ENCODE measurements at regions of chr7 and their contacts with region 1.

Region 1: GRCh38 chr7:129218514-129219062 is 6.2 kb upstream of the AHCYL2 start:
- DNase-seq: peak; percentile 72 to 80 (median 75)
- H3K4me3 ChIP-seq: no peak overlapping the region
- H3K4me3 Mint-ChIP-seq: no peak overlapping the region
- H3K27ac ChIP-seq: no peak overlapping the region
- H3K27ac Mint-ChIP-seq: peak overlapping the region in 2 of 7 donors; percentile 48 to 60
- H3K4me1 ChIP-seq: peaks cover 14% of the 10 kb centered on the region
- H3K4me1 Mint-ChIP-seq: peaks cover 8 to 11% (median 10%) of the 10 kb centered on the region in 4 donors
- H3K27me3 ChIP-seq: no peaks in the 10 kb centered on the region
- H3K27me3 Mint-ChIP-seq: peaks cover 2 to 6% of the 10 kb centered on the region in 2 donors

Region 2: DNA sequence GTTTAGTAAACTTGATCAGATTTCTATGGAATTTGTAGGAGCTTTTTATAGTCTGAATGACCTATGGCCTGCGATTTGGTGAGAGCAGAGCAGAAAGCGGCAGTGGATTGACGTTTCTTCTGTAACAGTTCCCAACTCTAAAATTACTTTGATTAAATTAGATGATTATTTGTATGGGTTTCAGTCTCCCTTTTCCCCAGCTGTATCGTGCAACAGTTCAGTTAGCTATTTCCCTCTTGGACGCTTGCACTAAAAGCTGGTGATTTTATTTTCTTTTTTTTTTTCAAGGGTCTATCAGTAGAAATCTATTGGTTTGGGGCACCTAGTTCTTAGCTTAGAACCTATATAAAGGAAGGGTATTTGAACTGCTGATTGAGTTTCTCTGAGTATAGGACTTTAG is 13.1 kb after region 1 on chr7:
- CTCF ChIA-PET with region 1: interaction called, 95 read pairs
- POLR2A ChIA-PET with region 1: interaction called, 3 read pairs
- intact Hi-C with region 1: no loop called
- DNase-seq: no peak
- H3K4me3 ChIP-seq: no peak overlapping the region
- H3K4me3 Mint-ChIP-seq: no peak overlapping the region
- H3K27ac ChIP-seq: no peak overlapping the region
- H3K27ac Mint-ChIP-seq: no peak overlapping the region
- H3K4me1 ChIP-seq: peaks cover 2% of the 10 kb centered on the region
- H3K4me1 Mint-ChIP-seq: peaks cover 16 to 24% (median 21%) of the 10 kb centered on the region in 4 donors
- H3K27me3 ChIP-seq: no peaks in the 10 kb centered on the region
- H3K27me3 Mint-ChIP-seq: no peaks in the 10 kb centered on the region

Region 3: DNA sequence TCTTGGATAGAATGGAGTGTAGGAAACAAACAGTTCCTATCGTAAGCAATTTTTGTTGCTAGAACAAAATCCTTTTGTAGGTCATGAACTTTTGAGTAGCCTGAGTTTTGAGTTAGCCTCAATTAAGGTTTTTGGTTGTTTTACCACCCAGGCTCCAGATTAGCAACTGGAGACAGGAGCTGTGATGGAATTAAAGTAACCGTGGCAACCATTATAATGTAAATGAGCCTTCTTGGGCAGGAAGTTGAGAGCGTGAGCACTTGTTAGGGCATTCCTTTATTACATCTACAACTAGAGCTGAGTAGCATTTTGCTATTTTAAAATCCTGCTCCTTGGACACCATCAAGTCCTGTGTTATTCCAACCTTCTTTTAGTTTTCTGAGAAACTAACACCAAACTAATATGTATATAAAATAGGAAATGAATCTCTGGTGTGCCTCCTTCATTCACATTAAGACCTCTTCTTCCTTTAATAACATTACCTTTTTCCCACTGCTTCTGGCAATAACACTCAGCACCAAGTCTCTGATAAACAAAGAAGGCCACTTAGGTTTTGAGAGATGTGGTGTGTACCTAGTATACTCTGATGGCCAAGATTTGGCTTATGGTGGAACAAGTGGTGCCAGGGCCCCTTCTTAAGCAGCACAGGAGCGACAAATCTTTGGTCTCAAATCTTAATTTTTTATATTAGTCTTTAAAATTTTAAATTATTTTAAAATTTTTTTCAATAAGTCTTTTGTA is 40.2 kb after region 1 on chr7:
- CTCF ChIA-PET with region 1: interaction called, 34 read pairs
- POLR2A ChIA-PET with region 1: no interaction called
- intact Hi-C with region 1: no loop called
- DNase-seq: peak in 2 of 5 donors; percentile 13 to 14
- H3K4me3 ChIP-seq: no peak overlapping the region
- H3K4me3 Mint-ChIP-seq: peak overlapping the region; percentile 45 to 88 (median 74)
- H3K27ac ChIP-seq: no peak overlapping the region
- H3K27ac Mint-ChIP-seq: peak overlapping the region; percentile 15 to 91 (median 80)
- H3K4me1 ChIP-seq: peaks cover 25% of the 10 kb centered on the region
- H3K4me1 Mint-ChIP-seq: peaks cover 22 to 37% (median 29%) of the 10 kb centered on the region in 4 donors
- H3K27me3 ChIP-seq: no peaks in the 10 kb centered on the region
- H3K27me3 Mint-ChIP-seq: no peaks in the 10 kb centered on the region

Region 4: GRCh38 chr7:129271500-129272355 is 53.1 kb after region 1 on chr7:
- CTCF ChIA-PET with region 1: interaction called, 358 read pairs
- POLR2A ChIA-PET with region 1: interaction called, 10 read pairs
- intact Hi-C with region 1: loop called (anchors 1 kb)
- DNase-seq: peak; percentile 70 to 73 (median 72)
- H3K4me3 ChIP-seq: no peak overlapping the region
- H3K4me3 Mint-ChIP-seq: peak overlapping the region in 4 of 8 donors; percentile 22 to 76 (median 50)
- H3K27ac ChIP-seq: no peak overlapping the region
- H3K27ac Mint-ChIP-seq: peak overlapping the region in 3 of 7 donors; percentile 33 to 60 (median 36)
- H3K4me1 ChIP-seq: no peaks in the 10 kb centered on the region
- H3K4me1 Mint-ChIP-seq: peaks cover 0 to 6% (median 5%) of the 10 kb centered on the region in 4 donors
- H3K27me3 ChIP-seq: no peaks in the 10 kb centered on the region
- H3K27me3 Mint-ChIP-seq: no peaks in the 10 kb centered on the region

Region 5: GRCh38 chr7:129285111-129285510 is 66.5 kb after region 1 on chr7:
- CTCF ChIA-PET with region 1: interaction called, 17 read pairs
- POLR2A ChIA-PET with region 1: no interaction called
- intact Hi-C with region 1: no loop called
- DNase-seq: no peak
- H3K4me3 ChIP-seq: no peak overlapping the region
- H3K4me3 Mint-ChIP-seq: no peak overlapping the region
- H3K27ac ChIP-seq: no peak overlapping the region
- H3K27ac Mint-ChIP-seq: no peak overlapping the region
- H3K4me1 ChIP-seq: no peaks in the 10 kb centered on the region
- H3K4me1 Mint-ChIP-seq: peaks cover 0 to 2% (median 0%) of the 10 kb centered on the region in 4 donors
- H3K27me3 ChIP-seq: no peaks in the 10 kb centered on the region
- H3K27me3 Mint-ChIP-seq: no peaks in the 10 kb centered on the region

Region 6: DNA sequence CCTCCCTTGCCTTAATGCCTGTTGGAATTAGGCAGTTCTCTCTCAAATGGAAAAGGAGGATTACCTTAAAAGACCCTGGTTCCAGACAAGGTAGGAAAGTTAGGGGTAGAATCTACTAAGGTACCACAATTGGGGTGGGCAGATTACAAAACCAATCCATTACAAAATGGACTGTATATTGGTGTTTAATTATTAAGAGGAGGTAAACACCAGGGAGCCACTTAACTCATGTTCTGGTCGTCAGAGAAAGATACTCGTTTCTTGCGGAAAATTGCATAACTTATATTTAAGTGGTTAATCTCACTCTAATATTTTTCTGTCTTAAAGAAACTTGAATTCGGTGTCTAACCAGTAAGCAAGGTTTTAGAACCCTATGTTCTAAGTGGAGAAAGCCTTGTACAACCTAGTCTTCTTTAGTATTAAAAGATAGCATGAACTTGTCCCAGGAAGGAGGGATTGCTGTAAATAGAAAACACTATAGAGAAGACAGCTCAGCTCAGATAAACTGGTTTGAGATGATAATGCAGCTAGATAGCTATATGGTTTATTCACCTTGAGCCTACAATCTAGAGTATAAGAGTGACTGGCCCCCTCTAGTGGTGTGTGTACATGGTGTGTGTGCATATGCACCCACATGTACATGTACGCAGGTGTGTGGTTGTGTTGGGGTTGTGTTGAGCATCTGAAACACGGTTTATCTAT is 157.6 kb after region 1 on chr7:
- CTCF ChIA-PET with region 1: interaction called, 33 read pairs
- POLR2A ChIA-PET with region 1: no interaction called
- intact Hi-C with region 1: loop called (anchors 1 kb)
- DNase-seq: peak; percentile 23 to 61 (median 34)
- H3K4me3 ChIP-seq: no peak overlapping the region
- H3K4me3 Mint-ChIP-seq: no peak overlapping the region
- H3K27ac ChIP-seq: no peak overlapping the region
- H3K27ac Mint-ChIP-seq: no peak overlapping the region
- H3K4me1 ChIP-seq: no peaks in the 10 kb centered on the region
- H3K4me1 Mint-ChIP-seq: peaks cover 7 to 13% (median 10%) of the 10 kb centered on the region in 4 donors
- H3K27me3 ChIP-seq: no peaks in the 10 kb centered on the region
- H3K27me3 Mint-ChIP-seq: no peaks in the 10 kb centered on the region

Region 7: GRCh38 chr7:129502376-129502776 is 283.8 kb after region 1 on chr7 and contains the start of gene SMKR1:
- CTCF ChIA-PET with region 1: no interaction called
- POLR2A ChIA-PET with region 1: no interaction called
- intact Hi-C with region 1: no loop called
- DNase-seq: peak; percentile 93 to 96 (median 96)
- H3K4me3 ChIP-seq: peak within 1 kb of the TSS; percentile 18 to 55
- H3K4me3 Mint-ChIP-seq: peak within 1 kb of the TSS; percentile 85 to 91 (median 88)
- H3K27ac ChIP-seq: peak within 1 kb of the TSS; percentile 66
- H3K27ac Mint-ChIP-seq: peak within 1 kb of the TSS; percentile 87 to 97 (median 93)
- H3K4me1 ChIP-seq: peaks cover 6% of the 10 kb centered on the region
- H3K4me1 Mint-ChIP-seq: peaks cover 6 to 18% (median 12%) of the 10 kb centered on the region in 4 donors
- H3K27me3 ChIP-seq: no peaks in the 10 kb centered on the region
- H3K27me3 Mint-ChIP-seq: no peaks in the 10 kb centered on the region
- total RNA-seq, gene SMKR1: 1.2 to 1.5 TPM

Region 8: GRCh38 chr7:130010689-130011412 is 792.3 kb after region 1 on chr7:
- CTCF ChIA-PET with region 1: no interaction called
- POLR2A ChIA-PET with region 1: no interaction called
- intact Hi-C with region 1: loop called (anchors 5 kb)
- DNase-seq: peak; percentile 79 to 83 (median 80)
- H3K4me3 ChIP-seq: no peak overlapping the region
- H3K4me3 Mint-ChIP-seq: no peak overlapping the region
- H3K27ac ChIP-seq: no peak overlapping the region
- H3K27ac Mint-ChIP-seq: peak overlapping the region in 3 of 7 donors; percentile 62 to 74 (median 65)
- H3K4me1 ChIP-seq: no peaks in the 10 kb centered on the region
- H3K4me1 Mint-ChIP-seq: peaks cover 0 to 4% (median 2%) of the 10 kb centered on the region in 4 donors
- H3K27me3 ChIP-seq: no peaks in the 10 kb centered on the region
- H3K27me3 Mint-ChIP-seq: no peaks in the 10 kb centered on the region